ENCODE measurements at regions of chr7 and their contacts with region 1.

Region 1: DNA sequence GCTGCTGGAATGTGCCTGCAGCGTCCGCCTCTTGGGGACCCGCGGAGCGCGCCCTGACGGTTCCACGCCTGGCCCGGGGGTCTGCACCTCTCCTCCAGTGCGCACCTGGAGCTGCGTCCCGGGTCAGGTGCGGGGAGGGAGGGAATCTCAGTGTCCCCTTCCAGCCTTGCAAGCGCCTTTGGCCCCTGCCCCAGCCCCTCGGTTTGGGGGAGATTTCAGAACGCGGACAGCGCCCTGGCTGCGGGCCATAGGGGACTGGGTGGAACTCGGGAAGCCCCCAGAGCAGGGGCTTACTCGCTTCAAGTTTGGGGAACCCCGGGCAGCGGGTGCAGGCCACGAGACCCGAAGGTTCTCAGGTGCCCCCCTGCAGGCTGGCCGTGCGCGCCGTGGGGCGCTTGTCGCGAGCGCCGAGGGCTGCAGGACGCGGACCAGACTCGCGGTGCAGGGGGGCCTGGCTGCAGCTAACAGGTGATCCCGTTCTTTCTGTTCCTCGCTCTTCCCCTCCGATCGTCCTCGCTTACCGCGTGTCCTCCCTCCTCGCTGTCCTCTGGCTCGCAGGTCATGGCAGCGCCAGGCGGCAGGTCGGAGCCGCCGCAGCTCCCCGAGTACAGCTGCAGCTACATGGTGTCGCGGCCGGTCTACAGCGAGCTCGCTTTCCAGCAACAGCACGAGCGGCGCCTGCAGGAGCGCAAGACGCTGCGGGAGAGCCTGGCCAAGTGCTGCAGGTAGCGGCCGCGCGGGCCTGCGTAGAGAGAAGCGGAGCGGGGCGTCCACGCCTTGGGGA is 645 bp downstream of the SLC26A4 start:
- DNase-seq: peak; percentile 55
- H3K4me3 Mint-ChIP-seq: peak overlapping the region; percentile 96
- H3K27ac Mint-ChIP-seq: peak overlapping the region; percentile 92
- H3K4me1 Mint-ChIP-seq: peaks cover 40% of the 10 kb centered on the region
- H3K27me3 Mint-ChIP-seq: peaks cover 3% of the 10 kb centered on the region

Region 2: GRCh38 chr7:107462740-107463444 is 198.4 kb before region 1 on chr7:
- intact Hi-C with region 1: loop called (anchors 10 kb)
- DNase-seq: peak; percentile 7
- H3K4me3 Mint-ChIP-seq: no peak overlapping the region
- H3K27ac Mint-ChIP-seq: no peak overlapping the region
- H3K4me1 Mint-ChIP-seq: no peaks in the 10 kb centered on the region
- H3K27me3 Mint-ChIP-seq: no peaks in the 10 kb centered on the region

Region 3: DNA sequence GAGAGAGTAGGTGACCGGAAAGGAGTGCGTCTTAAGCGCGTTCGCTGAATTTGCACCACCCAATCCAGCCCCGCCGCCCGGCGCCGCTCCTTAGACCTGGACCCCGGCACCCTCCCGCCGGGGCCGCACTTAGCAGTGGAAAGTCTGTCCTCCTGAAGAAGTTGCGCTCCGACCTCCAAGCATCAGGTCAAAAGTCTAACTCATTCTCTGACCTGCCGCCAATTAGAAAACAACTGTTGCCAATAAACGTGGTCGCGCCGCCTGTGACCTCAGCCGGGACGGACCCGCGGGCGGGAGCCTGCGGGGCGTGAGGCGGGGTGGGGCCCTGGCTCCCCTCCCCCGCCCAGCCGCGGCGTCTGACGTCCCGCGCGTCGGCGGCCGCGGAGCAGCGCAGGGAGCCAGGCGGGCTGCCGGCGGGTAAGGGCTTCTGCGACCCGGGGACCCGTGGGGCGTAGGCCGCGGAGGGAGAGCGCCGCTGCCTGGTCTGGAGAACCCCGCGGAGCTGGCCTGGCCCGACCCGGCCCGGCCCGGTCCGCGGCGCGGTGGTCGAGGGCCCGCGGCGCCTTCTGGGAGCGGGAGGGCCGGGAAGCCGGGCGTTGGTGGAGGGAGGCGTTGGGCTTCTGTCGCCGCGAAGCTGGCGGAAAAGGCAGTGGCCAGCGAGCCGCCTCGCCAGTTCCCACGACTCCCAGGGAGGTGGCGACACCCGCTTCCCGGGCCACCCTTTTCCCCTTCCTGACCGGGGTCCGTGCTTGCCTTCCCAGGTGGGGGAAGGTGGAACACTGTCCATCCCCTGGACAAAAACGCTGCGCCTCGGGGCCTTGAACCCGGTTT is 81.2 kb before region 1 on chr7 and contains the start of gene BCAP29:
- intact Hi-C with region 1: loop called (anchors 1 kb)
- DNase-seq: peak; percentile 65
- H3K4me3 Mint-ChIP-seq: peak within 1 kb of the TSS; percentile 89
- H3K27ac Mint-ChIP-seq: peak within 1 kb of the TSS; percentile 86
- H3K4me1 Mint-ChIP-seq: peaks cover 26% of the 10 kb centered on the region
- H3K27me3 Mint-ChIP-seq: no peaks in the 10 kb centered on the region
- total RNA-seq, gene BCAP29: 43.5 and 44.5 TPM in 2 replicates

Region 4: DNA sequence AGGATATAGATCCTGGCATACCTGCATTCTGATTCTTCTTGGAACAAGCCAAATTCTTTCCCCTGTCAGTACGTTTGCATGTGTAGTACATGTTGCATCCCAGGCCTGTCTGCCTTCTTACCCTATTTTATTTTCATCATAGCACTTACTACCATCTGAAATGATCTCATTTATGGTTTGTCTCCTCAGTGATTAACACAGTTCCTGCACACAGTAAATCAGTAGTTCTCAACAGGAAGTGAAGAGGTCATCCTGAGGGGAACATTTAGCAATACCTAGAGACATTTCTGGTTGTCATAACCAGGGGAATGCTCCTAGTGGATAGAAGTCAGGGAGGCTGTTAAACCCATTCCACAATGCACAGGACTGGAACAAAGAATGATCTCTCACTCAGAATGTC is 38.8 kb before region 1 on chr7:
- intact Hi-C with region 1: loop called (anchors 5 kb)
- DNase-seq: no peak
- H3K4me3 Mint-ChIP-seq: no peak overlapping the region
- H3K27ac Mint-ChIP-seq: no peak overlapping the region
- H3K4me1 Mint-ChIP-seq: no peaks in the 10 kb centered on the region
- H3K27me3 Mint-ChIP-seq: no peaks in the 10 kb centered on the region

Region 5: DNA sequence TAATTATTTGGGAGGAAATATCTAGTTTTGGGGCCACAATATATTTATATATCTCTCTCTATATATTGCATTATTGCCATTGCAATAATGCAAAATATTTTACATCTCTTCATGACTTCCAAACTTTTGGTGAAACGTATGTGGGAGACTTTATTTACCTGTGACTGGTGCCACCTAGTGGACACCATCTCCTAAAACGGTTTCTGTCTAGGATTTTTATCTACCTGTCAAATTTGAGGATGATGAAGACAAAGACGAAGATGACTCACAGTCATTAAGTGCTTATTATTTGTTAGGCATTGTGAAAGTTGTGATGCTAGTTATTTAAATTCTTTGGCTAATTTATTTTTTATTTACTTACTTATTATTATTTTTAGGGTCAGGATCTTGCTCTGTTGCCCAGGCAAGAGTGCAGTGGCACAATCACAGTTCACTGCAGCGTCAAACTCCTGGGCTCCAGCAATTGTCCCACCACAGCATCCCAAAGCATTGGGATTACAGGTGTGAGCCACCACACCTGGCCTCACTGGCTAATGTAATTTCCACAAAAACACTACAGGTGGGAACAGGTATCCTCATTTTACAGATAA is 64.0 kb after region 1 on chr7:
- intact Hi-C with region 1: loop called (anchors 1 kb)
- DNase-seq: peak; percentile 25
- H3K4me3 Mint-ChIP-seq: no peak overlapping the region
- H3K27ac Mint-ChIP-seq: no peak overlapping the region
- H3K4me1 Mint-ChIP-seq: no peaks in the 10 kb centered on the region
- H3K27me3 Mint-ChIP-seq: peaks cover 16% of the 10 kb centered on the region

Region 6: DNA sequence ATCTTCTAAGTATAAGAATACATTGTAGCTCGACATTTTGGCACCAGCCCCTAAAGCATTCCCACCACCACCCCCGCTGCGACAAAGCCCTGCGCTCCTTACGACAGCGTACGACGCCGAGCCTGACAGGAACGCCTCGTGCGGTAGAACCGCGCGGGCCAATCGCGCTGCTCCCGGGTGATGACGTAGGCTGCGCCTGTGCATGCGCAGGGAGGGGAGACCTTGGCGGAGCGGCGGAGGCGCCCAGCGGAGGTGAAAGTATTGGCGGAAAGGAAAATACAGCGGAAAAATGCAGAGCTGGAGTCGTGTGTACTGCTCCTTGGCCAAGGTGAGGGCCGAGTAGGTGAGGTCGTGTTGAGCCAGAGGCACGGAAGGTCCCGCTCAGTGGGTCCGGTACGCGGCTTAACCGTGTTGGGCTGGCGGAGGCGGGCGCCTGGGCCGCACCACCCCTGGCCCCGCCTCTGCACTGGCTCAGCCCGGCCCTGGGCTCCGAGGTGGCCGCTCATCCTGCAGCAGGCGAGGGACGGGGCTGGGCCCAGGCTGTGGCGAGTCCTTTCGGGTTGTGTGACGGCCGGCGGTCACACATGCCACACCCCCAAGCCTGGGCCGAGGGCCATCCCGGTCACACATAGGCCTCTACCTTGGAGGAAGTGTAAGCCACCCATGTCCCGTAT is 229.8 kb after region 1 on chr7 and contains the start of gene DLD:
- intact Hi-C with region 1: loop called (anchors 1 kb)
- DNase-seq: peak; percentile 93
- H3K4me3 Mint-ChIP-seq: peak within 1 kb of the TSS; percentile 100
- H3K27ac Mint-ChIP-seq: peak within 1 kb of the TSS; percentile 100
- H3K4me1 Mint-ChIP-seq: peaks cover 49% of the 10 kb centered on the region
- H3K27me3 Mint-ChIP-seq: peaks cover 3% of the 10 kb centered on the region
- total RNA-seq, gene DLD: 98.6 and 114 TPM in 2 replicates

Measured in activated T-helper 1 cell treated with anti-CD3 and anti-CD28 coated beads, Interleukin-12 subunit alpha, Interleukin-12 subunit beta, Interleukin-2, Interleukin-4 antibody, amounts not matched to agents 30 ng/mL and 10 ng/mL and 1 ng/mL, durations not matched to agents 14 hours and 24 hours and 36 hours (primary cell).